ENCODE measurements at regions of chr4 and their contacts with region 1.

Region 1: GRCh38 chr4:38759113-38759789 is 23.5 kb downstream of the TLR10 start:
- ATAC-seq: peak; percentile 83 to 97 (median 90)
- H3K4me3 ChIP-seq: no peak overlapping the region
- H3K27ac ChIP-seq: no peak overlapping the region
- H3K4me1 ChIP-seq: peaks cover 0 to 3% of the 10 kb centered on the region in 2 donors

Region 2: DNA sequence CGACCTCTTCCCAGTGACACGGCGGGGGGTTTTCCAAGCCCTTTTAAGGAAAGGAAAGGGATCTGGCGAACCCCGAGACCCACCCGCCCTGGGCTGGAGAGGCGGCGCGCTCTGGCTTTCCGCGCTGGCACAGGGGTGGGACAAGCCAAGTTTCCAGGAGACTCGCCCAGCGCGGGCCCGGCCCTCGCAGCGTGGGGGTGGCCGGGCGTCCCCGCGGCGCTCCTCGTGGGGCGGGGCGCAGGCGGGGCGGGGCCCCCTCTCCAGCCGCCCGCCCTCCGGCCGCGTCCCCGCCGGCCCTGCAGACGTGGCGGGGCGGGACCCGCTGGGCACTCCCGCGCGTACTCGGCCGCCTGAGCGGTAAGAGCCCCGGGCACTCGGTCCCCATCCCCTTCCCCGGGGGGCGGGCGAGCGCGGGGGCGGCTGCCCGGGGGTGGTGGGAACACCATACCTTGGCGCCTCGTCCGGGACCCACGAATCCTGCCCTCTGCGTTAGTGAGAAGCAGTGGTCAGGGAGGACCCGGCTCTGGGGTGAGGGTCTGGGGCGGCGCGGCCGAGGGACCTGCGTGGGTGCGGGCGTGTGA is 108.3 kb after region 1 on chr4 and contains the start of gene FAM114A1:
- in situ Hi-C with region 1: loop called in 1 of 9 experiments (anchors 25 kb)
- ATAC-seq: peak; percentile 79 to 96 (median 92)
- H3K4me3 ChIP-seq: peak within 1 kb of the TSS; percentile 35 to 83 (median 61)
- H3K27ac ChIP-seq: peak within 1 kb of the TSS in 1 of 2 donors; percentile 62
- H3K4me1 ChIP-seq: peaks cover 4 to 8% of the 10 kb centered on the region in 2 donors
- total RNA-seq, gene FAM114A1: 6.4 to 88.4 (median 9.7) TPM

Region 3: GRCh38 chr4:38958453-38959190 is 199.4 kb after region 1 on chr4:
- in situ Hi-C with region 1: no loop called
- ATAC-seq: no peak
- H3K4me3 ChIP-seq: no peak overlapping the region
- H3K27ac ChIP-seq: no peak overlapping the region
- H3K4me1 ChIP-seq: peaks cover 12 to 19% of the 10 kb centered on the region in 2 donors

Measured in motor neuron (in vitro differentiated cells).